Activated B cell treated with CpG ODN at 0.5 μM for 24 hours (primary cell): ENCODE measurements at regions of chr4 and their contacts with region 1.

Region 1: DNA sequence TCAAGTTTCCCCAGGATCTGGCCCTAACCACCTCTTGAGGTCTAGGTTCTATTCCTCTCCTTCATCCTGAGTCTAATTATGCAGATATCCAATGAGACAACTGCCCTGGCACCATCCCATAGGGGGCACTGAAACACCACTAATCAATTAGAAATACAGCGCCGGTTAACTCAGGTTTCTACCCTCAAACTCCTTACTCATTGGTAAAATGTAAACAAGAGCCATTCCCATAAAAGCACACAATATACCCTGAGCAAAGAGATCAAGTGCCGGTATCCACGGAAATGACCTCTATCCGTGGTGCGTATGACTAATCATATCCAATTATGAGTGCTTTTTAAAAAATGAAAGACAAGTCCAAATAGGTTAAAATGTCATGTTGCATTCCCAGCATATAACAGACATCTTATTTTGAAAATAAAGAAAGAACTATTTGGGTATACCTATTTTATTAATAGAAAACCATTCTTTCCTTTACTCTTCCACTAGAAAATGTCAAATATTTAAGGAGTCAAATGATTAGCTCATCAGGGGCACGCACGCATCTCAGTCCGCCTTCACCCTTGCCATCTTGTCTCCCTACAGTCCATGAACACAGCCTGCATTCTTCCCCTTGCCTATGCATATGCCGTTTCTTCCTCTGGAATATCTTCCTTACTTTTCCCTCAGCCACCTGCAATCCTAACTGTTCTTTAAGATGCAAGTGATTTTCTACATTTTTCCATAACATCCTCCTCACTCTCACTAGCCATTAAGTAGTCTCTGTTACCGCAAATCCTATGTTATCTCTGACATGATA is 141.1 kb downstream of the MAML3 start:
- DNase-seq: no peak
- ATAC-seq: peak; percentile 81
- H3K4me3 Mint-ChIP-seq: no peak overlapping the region
- H3K27ac Mint-ChIP-seq: no peak overlapping the region
- H3K4me1 Mint-ChIP-seq: no peaks in the 10 kb centered on the region
- H3K27me3 Mint-ChIP-seq: peaks cover 10% of the 10 kb centered on the region
- CTCF ChIP-seq: no peak

Region 2: DNA sequence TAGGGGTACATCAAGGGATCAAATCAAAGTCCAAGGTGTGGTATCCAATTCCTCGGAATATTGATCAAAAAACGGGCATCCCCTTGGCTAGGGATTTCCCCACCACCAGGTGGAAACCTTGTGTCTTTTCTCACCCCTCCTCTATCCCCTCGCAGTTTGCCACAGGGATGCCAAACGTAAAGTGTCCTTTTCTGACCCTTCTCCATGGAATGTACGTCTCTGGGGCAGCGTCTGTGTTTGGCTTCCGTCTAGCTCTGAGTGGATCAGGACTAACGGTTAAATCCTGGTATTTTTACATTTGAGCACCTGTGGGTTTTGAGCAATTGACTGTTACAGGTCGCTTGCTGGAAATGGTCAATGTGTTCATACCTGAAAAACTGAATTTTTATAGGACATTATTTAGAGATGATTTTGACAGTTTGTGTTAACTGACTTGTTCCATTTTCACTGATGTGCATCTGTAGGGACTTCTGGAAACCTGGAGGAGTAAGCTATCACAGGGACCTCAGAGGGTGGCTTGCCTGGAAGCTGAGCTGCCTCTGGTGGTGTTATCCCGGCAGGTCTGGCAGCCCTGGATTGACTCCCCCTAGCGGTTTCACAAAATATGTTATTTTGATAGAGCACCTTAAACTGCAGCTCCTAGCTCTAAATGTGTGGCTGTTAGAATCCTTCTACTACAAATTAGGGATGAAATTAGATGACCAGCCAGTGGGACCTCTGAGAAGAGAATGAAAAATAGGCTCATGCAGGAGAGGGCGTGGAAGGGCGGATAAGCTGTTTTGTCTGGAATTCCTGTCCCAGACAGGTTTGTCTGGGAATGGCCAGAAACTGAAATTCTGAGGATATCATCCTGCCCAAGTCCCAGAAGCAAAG is 356.0 kb before region 1 on chr4:
- CTCF ChIA-PET with region 1: interaction called, 5 read pairs
- POLR2A ChIA-PET with region 1: no interaction called
- intact Hi-C with region 1: loop called (anchors 5 kb)
- DNase-seq: no peak
- ATAC-seq: peak; percentile 79
- H3K4me3 Mint-ChIP-seq: no peak overlapping the region
- H3K27ac Mint-ChIP-seq: no peak overlapping the region
- H3K4me1 Mint-ChIP-seq: peaks cover 5% of the 10 kb centered on the region
- H3K27me3 Mint-ChIP-seq: peaks cover 17% of the 10 kb centered on the region
- CTCF ChIP-seq: peak; percentile 70

Region 3: DNA sequence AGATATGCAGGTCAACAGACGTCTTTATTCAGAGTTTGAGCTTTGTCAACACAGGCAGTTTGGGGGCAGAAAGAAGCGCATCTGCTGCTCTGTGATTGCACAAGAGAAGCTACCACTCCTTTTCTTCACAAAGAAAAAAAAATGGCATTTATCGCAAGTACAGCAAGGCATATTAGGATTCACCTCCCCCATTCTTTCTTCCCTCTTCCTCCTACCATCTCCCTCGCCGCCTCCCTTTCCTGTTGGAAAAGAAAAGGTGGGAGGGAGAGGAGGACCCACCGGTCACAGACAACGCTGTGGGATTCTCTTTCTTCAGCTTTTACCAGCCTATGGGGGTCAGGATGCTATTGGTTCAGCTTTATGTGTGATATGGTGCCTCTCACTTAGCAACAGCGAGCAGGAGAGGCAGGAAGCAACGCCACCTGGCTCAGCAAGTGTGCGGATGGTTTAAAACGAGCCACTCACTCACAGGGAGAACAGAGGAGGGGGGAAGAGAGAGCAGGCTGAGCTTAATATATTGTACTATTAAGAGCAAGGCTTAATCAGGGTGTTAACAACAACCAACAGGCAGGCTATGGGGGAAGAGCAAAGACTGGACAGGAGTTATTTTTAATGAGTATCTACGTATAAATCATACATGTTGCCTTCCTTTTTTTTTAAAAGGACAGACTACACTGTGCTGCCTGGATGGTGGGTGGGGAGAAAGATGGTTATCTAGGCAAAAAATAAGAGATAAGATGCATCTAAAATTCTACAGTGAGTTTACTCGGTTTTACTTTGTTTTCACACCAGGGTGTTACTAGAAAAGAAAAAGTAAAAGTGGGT is 36.3 kb after region 1 on chr4:
- CTCF ChIA-PET with region 1: interaction called, 5 read pairs
- POLR2A ChIA-PET with region 1: no interaction called
- intact Hi-C with region 1: loop called (anchors 2 kb)
- DNase-seq: no peak
- ATAC-seq: peak; percentile 81
- H3K4me3 Mint-ChIP-seq: peak overlapping the region; percentile 74
- H3K27ac Mint-ChIP-seq: peak overlapping the region; percentile 33
- H3K4me1 Mint-ChIP-seq: peaks cover 33% of the 10 kb centered on the region
- H3K27me3 Mint-ChIP-seq: peaks cover 14% of the 10 kb centered on the region
- CTCF ChIP-seq: no peak

Region 4: DNA sequence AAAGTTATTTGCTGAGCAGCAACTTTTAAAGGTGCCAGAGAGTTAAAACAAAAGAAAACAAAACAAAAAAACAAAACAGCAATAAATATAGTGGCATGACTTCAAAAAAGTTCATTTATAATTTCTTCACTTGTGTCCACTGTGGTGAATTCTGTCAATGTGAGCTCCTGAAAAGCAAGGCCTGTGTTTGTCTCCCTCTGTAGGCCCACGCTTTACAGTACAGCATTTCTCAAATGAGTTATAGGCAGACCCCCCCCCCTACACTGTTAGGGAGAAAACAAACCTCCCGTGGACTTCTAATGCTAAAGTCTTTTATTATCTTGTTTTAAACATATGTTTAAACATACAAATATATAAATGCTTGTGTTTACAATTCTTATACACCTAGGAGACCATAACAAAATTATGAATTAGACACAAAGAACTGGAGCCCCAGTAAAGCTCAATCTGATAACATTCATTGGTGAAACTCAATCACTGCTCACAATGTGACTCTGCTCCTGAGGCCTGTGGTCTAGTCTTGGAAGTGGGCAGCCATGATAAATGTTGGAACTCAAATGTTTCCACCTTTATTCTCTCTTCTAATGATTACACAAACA is 313.6 kb after region 1 on chr4:
- CTCF ChIA-PET with region 1: interaction called, 4 read pairs
- POLR2A ChIA-PET with region 1: no interaction called
- intact Hi-C with region 1: loop called (anchors 1 kb)
- DNase-seq: no peak
- ATAC-seq: no peak
- H3K4me3 Mint-ChIP-seq: no peak overlapping the region
- H3K27ac Mint-ChIP-seq: no peak overlapping the region
- H3K4me1 Mint-ChIP-seq: peaks cover 10% of the 10 kb centered on the region
- H3K27me3 Mint-ChIP-seq: peaks cover 14% of the 10 kb centered on the region
- CTCF ChIP-seq: no peak

Region 5: DNA sequence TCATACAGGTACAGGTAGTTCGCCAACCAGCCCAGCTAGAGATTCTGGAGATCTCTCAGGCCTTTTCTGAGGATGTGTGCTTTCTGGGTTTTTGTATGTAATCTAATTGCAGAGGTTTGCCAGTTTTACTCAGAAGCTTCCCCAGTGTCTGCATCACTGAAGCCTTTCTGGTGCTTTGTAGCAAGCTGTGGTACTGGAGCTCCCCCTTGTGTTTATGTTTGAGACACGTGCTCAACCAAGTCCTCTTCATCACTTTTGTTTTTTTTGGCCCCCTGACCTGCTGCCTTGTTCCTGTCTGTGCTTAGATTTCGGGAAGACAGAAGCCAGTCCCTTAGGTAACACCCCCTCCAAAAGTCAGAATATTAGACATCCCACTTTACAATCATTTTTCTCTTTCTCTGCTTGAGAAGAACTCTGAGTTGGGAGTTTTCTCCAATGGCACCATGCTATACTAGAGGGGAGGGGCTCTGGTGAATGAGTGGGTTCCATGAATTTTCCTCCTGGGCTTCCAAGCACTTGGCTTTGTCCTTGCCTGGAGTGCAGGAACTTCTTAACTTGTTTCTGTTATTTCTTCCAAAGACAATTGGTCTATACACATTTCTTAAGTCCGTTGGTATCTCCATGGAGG is 871.7 kb after region 1 on chr4:
- CTCF ChIA-PET with region 1: no interaction called
- POLR2A ChIA-PET with region 1: no interaction called
- intact Hi-C with region 1: loop called (anchors 1 kb)
- DNase-seq: no peak
- ATAC-seq: peak; percentile 79
- H3K4me3 Mint-ChIP-seq: no peak overlapping the region
- H3K27ac Mint-ChIP-seq: no peak overlapping the region
- H3K4me1 Mint-ChIP-seq: no peaks in the 10 kb centered on the region
- H3K27me3 Mint-ChIP-seq: peaks cover 16% of the 10 kb centered on the region
- CTCF ChIP-seq: no peak